ENCODE measurements at regions of chr2 and their contacts with region 1.

Region 1: DNA sequence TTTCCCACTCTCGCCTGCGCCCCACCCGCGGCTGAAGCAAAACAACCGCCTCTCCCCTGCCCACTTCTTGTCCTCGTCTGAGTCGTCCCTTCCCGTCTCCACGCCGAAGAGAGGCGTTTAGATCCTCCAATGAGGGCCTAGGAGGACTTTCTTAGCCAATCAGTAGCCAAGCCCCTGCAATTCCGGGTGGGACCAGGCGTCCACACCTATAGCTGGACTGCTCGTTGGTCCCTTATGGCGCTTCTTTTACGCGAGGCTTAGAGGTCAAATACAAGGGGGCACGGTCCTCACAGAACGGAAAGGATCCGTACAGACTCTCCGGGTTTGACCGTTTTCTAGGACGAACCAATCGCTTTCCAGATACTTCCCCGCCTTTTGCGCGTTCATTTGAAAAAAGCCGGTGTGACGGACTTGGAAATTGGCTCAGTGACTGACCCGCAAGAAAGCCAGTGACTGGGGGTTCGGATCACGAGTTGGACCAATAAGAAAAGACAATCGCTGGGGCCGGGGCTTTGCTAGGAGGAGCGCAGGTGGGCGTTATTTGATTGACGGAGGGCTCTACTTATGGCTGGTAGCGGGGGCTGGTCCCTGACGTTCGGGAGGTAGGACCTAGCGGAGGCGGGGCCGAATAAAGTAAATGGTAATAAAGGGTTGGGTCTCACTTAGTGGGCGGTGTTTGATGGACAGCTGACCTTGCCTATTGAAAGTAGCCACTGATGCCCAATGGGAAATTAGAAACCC is 565 bp upstream of the PPM1B start:
- DNase-seq: peak; percentile 82
- ATAC-seq: peak; percentile 79
- H3K4me3 Mint-ChIP-seq: peak overlapping the region; percentile 99
- H3K27ac Mint-ChIP-seq: peak overlapping the region; percentile 100
- H3K4me1 Mint-ChIP-seq: peaks cover 41% of the 10 kb centered on the region
- H3K27me3 Mint-ChIP-seq: no peaks in the 10 kb centered on the region
- CTCF ChIP-seq: no peak

Region 2: DNA sequence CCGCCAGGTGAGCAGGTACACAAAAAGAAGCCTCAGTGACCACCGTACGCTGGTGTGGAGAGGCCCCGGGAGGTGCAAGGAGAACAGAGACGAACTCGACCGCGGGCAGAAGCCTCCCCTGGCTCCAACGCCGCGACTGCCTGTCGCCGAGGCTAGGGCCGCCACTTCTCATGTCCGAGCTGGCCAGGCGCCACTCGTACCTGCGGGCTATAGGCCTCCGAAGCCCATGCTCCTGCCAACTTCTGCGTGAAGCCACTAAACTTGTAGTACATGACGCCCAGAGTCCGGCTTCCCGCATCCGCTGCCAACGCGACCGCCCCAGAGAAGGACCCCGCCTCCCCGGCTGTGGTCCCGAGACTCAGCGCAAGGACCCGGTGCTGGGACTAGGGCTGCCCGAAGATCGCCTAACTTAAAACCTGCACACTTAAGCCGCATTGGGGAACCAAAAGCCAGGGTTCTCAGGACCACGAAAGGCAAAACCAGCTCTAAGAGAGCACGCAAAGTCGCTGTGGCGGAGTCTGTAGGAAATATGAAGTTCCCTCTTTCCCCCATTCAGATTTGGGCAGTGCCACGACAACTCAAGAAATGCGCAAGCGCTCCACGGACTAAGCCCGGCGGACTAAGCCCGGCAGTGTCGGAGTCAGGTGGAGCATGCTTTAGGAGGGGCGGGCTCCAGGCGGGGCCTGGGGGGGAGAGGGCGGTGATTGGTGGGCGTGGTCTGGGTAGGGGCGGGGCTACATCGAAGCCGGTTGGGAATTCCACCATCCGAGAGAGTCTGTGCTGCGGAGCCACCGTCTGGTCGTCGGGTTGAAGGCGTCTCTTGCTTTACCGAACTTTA is 1807.0 kb before region 1 on chr2 and contains the start of gene COX7A2L:
- CTCF ChIA-PET with region 1: no interaction called
- POLR2A ChIA-PET with region 1: no interaction called
- intact Hi-C with region 1: loop called (anchors 1 kb)
- DNase-seq: peak; percentile 90
- ATAC-seq: peak; percentile 95
- H3K4me3 Mint-ChIP-seq: peak within 1 kb of the TSS; percentile 94
- H3K27ac Mint-ChIP-seq: peak within 1 kb of the TSS; percentile 99
- H3K4me1 Mint-ChIP-seq: peaks cover 44% of the 10 kb centered on the region
- H3K27me3 Mint-ChIP-seq: peaks cover 4% of the 10 kb centered on the region
- CTCF ChIP-seq: no peak
- total RNA-seq, gene COX7A2L: 84.2 and 86.4 TPM in 2 replicates

Region 3: GRCh38 chr2:43773876-43774613 is 394.1 kb before region 1 on chr2 and contains the start of gene DYNC2LI1:
- CTCF ChIA-PET with region 1: no interaction called
- POLR2A ChIA-PET with region 1: no interaction called
- intact Hi-C with region 1: loop called (anchors 1 kb)
- DNase-seq: peak; percentile 75
- ATAC-seq: peak; percentile 98
- H3K4me3 Mint-ChIP-seq: peak within 1 kb of the TSS; percentile 100
- H3K27ac Mint-ChIP-seq: peak within 1 kb of the TSS; percentile 85
- H3K4me1 Mint-ChIP-seq: peaks cover 12% of the 10 kb centered on the region
- H3K27me3 Mint-ChIP-seq: peaks cover 4% of the 10 kb centered on the region
- CTCF ChIP-seq: no peak
- total RNA-seq, gene DYNC2LI1: 8.9 and 10.4 TPM in 2 replicates

Region 4: GRCh38 chr2:43818761-43819160 is 349.3 kb before region 1 on chr2:
- CTCF ChIA-PET with region 1: no interaction called
- POLR2A ChIA-PET with region 1: no interaction called
- intact Hi-C with region 1: no loop called
- DNase-seq: no peak
- ATAC-seq: peak; percentile 52
- H3K4me3 Mint-ChIP-seq: no peak overlapping the region
- H3K27ac Mint-ChIP-seq: no peak overlapping the region
- H3K4me1 Mint-ChIP-seq: peaks cover 5% of the 10 kb centered on the region
- H3K27me3 Mint-ChIP-seq: peaks cover 14% of the 10 kb centered on the region
- CTCF ChIP-seq: no peak

Region 5: GRCh38 chr2:44181648-44182047 is 13.5 kb after region 1 on chr2:
- CTCF ChIA-PET with region 1: no interaction called
- POLR2A ChIA-PET with region 1: interaction called, 17 read pairs
- intact Hi-C with region 1: loop called (anchors 1 kb)
- DNase-seq: no peak
- ATAC-seq: peak; percentile 75
- H3K4me3 Mint-ChIP-seq: peak overlapping the region; percentile 36
- H3K27ac Mint-ChIP-seq: peak overlapping the region; percentile 42
- H3K4me1 Mint-ChIP-seq: peaks cover 71% of the 10 kb centered on the region
- H3K27me3 Mint-ChIP-seq: no peaks in the 10 kb centered on the region
- CTCF ChIP-seq: no peak

Region 6: GRCh38 chr2:44715671-44716081 is 547.6 kb after region 1 on chr2:
- CTCF ChIA-PET with region 1: no interaction called
- POLR2A ChIA-PET with region 1: no interaction called
- intact Hi-C with region 1: loop called (anchors 10 kb)
- DNase-seq: no peak
- ATAC-seq: no peak
- H3K4me3 Mint-ChIP-seq: no peak overlapping the region
- H3K27ac Mint-ChIP-seq: peak overlapping the region; percentile 46
- H3K4me1 Mint-ChIP-seq: peaks cover 47% of the 10 kb centered on the region
- H3K27me3 Mint-ChIP-seq: no peaks in the 10 kb centered on the region
- CTCF ChIP-seq: no peak

Region 7: DNA sequence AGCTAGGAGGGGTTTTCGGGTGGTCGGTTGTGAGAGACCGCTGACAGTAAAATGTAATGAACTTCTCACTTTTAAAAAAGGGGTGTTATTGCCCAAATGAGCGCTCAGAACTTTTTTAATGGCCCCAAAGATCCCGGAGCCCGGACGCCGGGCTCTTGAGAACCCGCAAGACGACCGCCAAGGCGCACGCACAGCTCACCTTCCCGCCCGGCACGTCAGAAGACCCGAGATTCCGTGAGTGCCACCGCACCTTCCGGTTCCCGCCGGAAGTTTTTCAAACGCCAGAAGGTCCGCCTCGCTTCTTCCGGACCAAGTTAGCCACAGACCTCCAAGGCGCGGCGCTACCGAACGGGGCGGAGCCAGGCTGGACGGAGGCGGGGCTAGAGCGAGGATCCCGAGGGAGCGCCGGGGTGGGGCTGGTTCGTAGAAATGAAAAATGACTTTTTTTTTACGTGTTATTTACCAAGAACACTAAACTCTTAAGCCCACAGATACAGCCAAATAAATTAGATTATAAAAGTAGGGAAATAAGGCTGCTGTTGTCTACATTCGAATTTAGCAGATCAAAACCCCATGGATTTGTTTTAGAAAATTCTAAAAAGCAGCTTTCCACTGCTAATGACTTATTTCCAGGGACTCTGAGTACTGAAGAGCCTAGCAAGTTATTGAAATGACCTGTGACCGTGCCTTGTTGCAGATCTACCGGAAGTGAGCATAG is 1443.1 kb after region 1 on chr2 and contains the start of gene SRBD1:
- CTCF ChIA-PET with region 1: no interaction called
- POLR2A ChIA-PET with region 1: interaction called, 3 read pairs
- intact Hi-C with region 1: loop called (anchors 2 kb)
- DNase-seq: peak; percentile 94
- ATAC-seq: peak; percentile 98
- H3K4me3 Mint-ChIP-seq: peak within 1 kb of the TSS; percentile 96
- H3K27ac Mint-ChIP-seq: peak within 1 kb of the TSS; percentile 95
- H3K4me1 Mint-ChIP-seq: peaks cover 29% of the 10 kb centered on the region
- H3K27me3 Mint-ChIP-seq: no peaks in the 10 kb centered on the region
- CTCF ChIP-seq: no peak
- total RNA-seq, gene SRBD1: 20.2 and 20.8 TPM in 2 replicates